Activated CD8-positive, alpha-beta T cell treated with anti-CD3 and anti-CD28 coated beads, Interleukin-2, amount 10 ng/mL, durations not matched to agents 7 days and 5 days (primary cell): ENCODE measurements at regions of chr6 and their contacts with region 1.

Region 1: GRCh38 chr6:13614926-13615798 is at the start of gene NOL7:
- DNase-seq: peak; percentile 99
- ATAC-seq: peak; percentile 93
- H3K4me3 Mint-ChIP-seq: peak within 1 kb of the TSS; percentile 99
- H3K27ac Mint-ChIP-seq: peak within 1 kb of the TSS; percentile 96
- H3K4me1 Mint-ChIP-seq: peaks cover 45% of the 10 kb centered on the region
- H3K27me3 Mint-ChIP-seq: no peaks in the 10 kb centered on the region
- total RNA-seq, gene NOL7: 67.3 to 71.6 TPM

Region 2: DNA sequence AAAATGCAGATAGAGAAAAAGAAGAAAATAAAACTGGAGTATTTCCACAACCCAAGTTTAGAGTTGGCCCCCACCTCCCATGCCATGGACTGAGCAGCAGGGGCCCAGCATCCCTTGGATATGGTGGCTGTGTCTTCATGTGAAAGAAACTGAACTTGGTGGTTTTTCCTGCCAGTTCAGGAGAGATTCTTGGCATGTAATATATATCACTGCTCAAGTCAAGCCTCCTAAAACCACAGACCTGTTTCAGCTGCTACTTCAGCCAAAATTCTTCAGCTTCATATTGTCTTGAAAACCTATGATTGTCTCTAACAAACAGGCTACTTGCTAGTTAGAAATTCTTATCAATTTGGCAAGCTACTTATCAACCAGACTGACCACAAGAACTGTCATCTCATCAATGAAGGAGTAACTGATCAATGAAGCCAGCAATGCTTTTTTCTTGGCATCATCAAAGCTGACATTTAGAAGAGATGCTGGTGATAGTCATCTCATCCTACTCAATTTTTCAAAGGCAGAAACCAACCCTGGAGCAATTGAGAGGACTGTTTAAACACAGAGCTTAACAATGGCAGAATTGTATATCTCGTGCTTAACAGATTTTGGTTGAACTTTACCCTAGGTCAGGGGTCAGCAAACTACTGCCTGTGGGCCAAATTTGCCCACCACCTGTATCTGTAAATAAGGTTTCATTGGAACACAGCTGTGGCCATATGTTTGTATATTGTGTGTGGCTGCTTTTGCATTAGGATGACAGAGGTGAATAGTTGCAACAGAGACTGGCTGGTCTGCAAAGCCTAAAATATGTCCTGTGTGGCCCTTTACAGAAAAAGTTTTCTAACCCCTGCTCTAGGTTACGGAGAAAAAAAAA is 10.4 kb before region 1 on chr6:
- CTCF ChIA-PET with region 1: interaction called, 10 read pairs
- POLR2A ChIA-PET with region 1: interaction called, 16 read pairs
- DNase-seq: no peak
- ATAC-seq: no peak
- H3K4me3 Mint-ChIP-seq: no peak overlapping the region
- H3K27ac Mint-ChIP-seq: no peak overlapping the region
- H3K4me1 Mint-ChIP-seq: peaks cover 4% of the 10 kb centered on the region
- H3K27me3 Mint-ChIP-seq: no peaks in the 10 kb centered on the region

Region 3: GRCh38 chr6:13630499-13630898 is 15.3 kb after region 1 on chr6:
- CTCF ChIA-PET with region 1: interaction called, 45 read pairs
- POLR2A ChIA-PET with region 1: interaction called, 11 read pairs
- DNase-seq: no peak
- ATAC-seq: peak; percentile 47
- H3K4me3 Mint-ChIP-seq: no peak overlapping the region
- H3K27ac Mint-ChIP-seq: no peak overlapping the region
- H3K4me1 Mint-ChIP-seq: peaks cover 5% of the 10 kb centered on the region
- H3K27me3 Mint-ChIP-seq: no peaks in the 10 kb centered on the region

Region 4: GRCh38 chr6:13635948-13636658 is 20.9 kb after region 1 on chr6:
- CTCF ChIA-PET with region 1: interaction called, 16 read pairs
- POLR2A ChIA-PET with region 1: interaction called, 11 read pairs
- DNase-seq: no peak
- ATAC-seq: peak; percentile 55
- H3K4me3 Mint-ChIP-seq: no peak overlapping the region
- H3K27ac Mint-ChIP-seq: peak overlapping the region; percentile 81
- H3K4me1 Mint-ChIP-seq: peaks cover 27% of the 10 kb centered on the region
- H3K27me3 Mint-ChIP-seq: no peaks in the 10 kb centered on the region

Region 5: GRCh38 chr6:13681305-13682061 is 66.3 kb after region 1 on chr6:
- CTCF ChIA-PET with region 1: interaction called, 10 read pairs
- POLR2A ChIA-PET with region 1: interaction called, 4 read pairs
- DNase-seq: no peak
- ATAC-seq: peak; percentile 79
- H3K4me3 Mint-ChIP-seq: peak overlapping the region; percentile 51
- H3K27ac Mint-ChIP-seq: peak overlapping the region; percentile 84
- H3K4me1 Mint-ChIP-seq: peaks cover 43% of the 10 kb centered on the region
- H3K27me3 Mint-ChIP-seq: no peaks in the 10 kb centered on the region

Region 6: GRCh38 chr6:13711733-13712598 is 96.8 kb after region 1 on chr6 and contains the start of gene RANBP9:
- CTCF ChIA-PET with region 1: interaction called, 36 read pairs
- POLR2A ChIA-PET with region 1: interaction called, 23 read pairs
- DNase-seq: peak; percentile 90
- ATAC-seq: peak; percentile 86
- H3K4me3 Mint-ChIP-seq: peak within 1 kb of the TSS; percentile 94
- H3K27ac Mint-ChIP-seq: peak within 1 kb of the TSS; percentile 97
- H3K4me1 Mint-ChIP-seq: peaks cover 51% of the 10 kb centered on the region
- H3K27me3 Mint-ChIP-seq: no peaks in the 10 kb centered on the region
- total RNA-seq, gene RANBP9: 50.0 to 53.4 TPM

Region 7: GRCh38 chr6:13846841-13847240 is 231.7 kb after region 1 on chr6:
- CTCF ChIA-PET with region 1: no interaction called
- POLR2A ChIA-PET with region 1: no interaction called
- DNase-seq: peak; percentile 9
- ATAC-seq: no peak
- H3K4me3 Mint-ChIP-seq: no peak overlapping the region
- H3K27ac Mint-ChIP-seq: no peak overlapping the region
- H3K4me1 Mint-ChIP-seq: no peaks in the 10 kb centered on the region
- H3K27me3 Mint-ChIP-seq: peaks cover 9% of the 10 kb centered on the region